HEK293 (cell line): ENCODE measurements at regions of chr7 and their contacts with region 1.

Region 1: DNA sequence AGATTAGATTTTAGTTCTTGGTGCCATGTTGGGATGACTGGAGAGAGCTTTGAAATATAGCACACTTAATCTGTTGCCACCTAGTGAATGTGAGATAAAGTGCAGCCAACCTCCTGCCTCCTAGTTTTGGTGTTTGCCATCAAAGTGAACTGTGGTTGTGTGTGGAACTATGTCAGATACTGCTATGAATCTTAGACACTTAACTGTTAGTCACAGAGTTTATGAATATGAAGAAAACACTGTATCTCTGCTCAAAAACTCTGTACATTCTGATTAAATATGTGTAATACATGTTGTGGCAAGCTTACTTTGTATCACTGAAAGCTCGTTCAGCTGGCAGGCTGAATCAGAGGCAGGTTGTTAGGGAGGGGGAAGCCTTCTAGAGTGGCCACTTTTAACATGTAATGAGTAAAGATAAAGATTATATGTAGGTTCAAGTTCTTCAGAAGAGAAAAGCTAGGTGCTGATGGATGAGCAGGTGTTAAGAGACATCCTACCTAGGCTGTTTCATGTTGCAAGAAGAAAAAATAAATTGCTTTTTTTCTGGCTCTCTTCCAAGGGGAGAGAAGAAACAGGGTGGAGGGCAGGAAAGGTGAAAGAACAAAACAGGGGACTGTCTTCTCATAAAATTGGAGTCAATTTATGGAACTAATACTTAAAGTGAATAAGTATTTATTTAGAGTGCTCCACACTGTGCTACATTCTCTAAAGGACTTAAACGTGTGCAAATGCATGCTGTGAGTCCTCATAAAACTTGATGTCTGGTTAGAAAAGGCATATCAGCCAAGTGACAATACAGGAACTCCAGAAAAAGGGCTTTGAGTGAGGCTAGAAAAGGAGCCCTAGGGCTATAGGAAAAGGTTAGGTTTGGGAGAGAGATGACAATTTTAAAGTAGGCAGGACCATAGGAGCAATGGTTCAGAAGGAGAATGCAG is 14.1 kb upstream of the LAMB1 start:
- H3K4me3 ChIP-seq: no peak overlapping the region
- H3K27ac ChIP-seq: peak overlapping the region; percentile 47
- H3K4me1 ChIP-seq: peaks cover 24% of the 10 kb centered on the region
- CTCF ChIP-seq: no peak

Region 2: GRCh38 chr7:108002726-108003598 is 14.1 kb before region 1 on chr7 and contains the start of gene LAMB1:
- CTCF ChIA-PET with region 1: interaction called, 8 read pairs
- POLR2A ChIA-PET with region 1: interaction called, 18 read pairs
- H3K4me3 ChIP-seq: peak within 1 kb of the TSS; percentile 60
- H3K27ac ChIP-seq: peak within 1 kb of the TSS; percentile 70
- H3K4me1 ChIP-seq: peaks cover 6% of the 10 kb centered on the region
- CTCF ChIP-seq: no peak

Region 3: GRCh38 chr7:108038986-108039385 is 21.9 kb after region 1 on chr7:
- CTCF ChIA-PET with region 1: interaction called, 10 read pairs
- POLR2A ChIA-PET with region 1: no interaction called
- H3K4me3 ChIP-seq: no peak overlapping the region
- H3K27ac ChIP-seq: no peak overlapping the region
- H3K4me1 ChIP-seq: no peaks in the 10 kb centered on the region
- CTCF ChIP-seq: no peak